ENCODE measurements at regions of chr19 and their contacts with region 1.

Region 1: GRCh38 chr19:49817964-49818648 is at the start of gene MED25:
- DNase-seq: peak; percentile 85
- ATAC-seq: peak; percentile 72
- H3K4me3 ChIP-seq: peak within 1 kb of the TSS; percentile 79
- H3K27ac ChIP-seq: peak within 1 kb of the TSS; percentile 58
- H3K4me1 ChIP-seq: peaks cover 19% of the 10 kb centered on the region
- H3K27me3 ChIP-seq: no peaks in the 10 kb centered on the region
- CTCF ChIP-seq: no peak
- total RNA-seq, gene MED25: 47.5 and 54.9 TPM in 2 replicates

Region 2: DNA sequence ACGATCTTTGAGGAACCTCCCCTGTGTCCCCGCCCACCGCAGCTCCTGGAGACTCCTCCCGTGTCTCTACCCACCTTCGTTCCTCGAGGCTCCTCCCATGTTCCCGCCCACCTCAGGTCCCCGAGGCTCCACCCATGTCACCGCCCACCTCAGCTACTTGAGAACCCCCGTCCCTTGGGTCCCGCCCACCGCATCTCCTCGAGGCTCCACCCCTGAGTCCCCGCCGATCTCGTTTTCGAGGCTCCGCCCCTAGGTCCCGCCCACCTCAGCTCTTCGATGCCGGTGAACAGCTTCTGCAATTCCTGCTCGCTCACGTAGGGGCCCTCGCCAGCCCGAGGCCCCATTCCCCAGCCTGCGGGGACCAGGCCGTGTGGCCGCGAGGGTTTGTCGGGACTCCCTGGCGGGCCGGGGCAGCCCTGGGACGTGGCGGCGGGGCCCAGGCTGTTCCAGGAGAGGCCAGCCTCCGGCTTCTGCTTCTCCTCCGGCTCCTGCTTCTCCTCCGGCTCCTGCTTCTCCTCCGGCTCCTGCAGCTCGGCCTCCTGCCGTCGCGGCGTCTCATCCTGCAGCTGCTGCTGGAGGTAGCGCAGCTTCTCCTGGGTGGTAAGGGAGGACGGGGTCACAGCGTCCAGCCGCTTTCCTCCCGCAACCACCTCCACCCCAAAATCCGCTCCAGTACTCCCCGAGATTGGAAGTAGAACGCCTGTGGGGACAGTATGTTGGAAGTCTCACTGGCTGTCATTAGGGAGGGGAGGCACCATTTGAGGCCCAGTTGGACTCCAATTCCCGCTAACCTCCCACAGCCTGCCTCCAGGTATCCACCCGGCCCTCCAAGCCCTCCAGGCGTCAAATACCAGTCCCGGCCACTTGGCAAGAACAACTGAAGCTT is 71.7 kb before region 1 on chr19:
- CTCF ChIA-PET with region 1: no interaction called
- POLR2A ChIA-PET with region 1: no interaction called
- intact Hi-C with region 1: loop called (anchors 5 kb)
- DNase-seq: peak; percentile 46
- ATAC-seq: peak; percentile 50
- H3K4me3 ChIP-seq: no peak overlapping the region
- H3K27ac ChIP-seq: no peak overlapping the region
- H3K4me1 ChIP-seq: no peaks in the 10 kb centered on the region
- H3K27me3 ChIP-seq: no peaks in the 10 kb centered on the region
- CTCF ChIP-seq: 0 out of 2 replicates have a peak, but pooled peaks have one; percentile 20

Region 3: GRCh38 chr19:49766007-49766937 is 51.8 kb before region 1 on chr19:
- CTCF ChIA-PET with region 1: no interaction called
- POLR2A ChIA-PET with region 1: interaction called, 4 read pairs
- intact Hi-C with region 1: loop called (anchors 1 kb)
- DNase-seq: peak; percentile 100
- ATAC-seq: peak; percentile 91
- H3K4me3 ChIP-seq: peak overlapping the region; percentile 62
- H3K27ac ChIP-seq: peak overlapping the region; percentile 90
- H3K4me1 ChIP-seq: peaks cover 23% of the 10 kb centered on the region
- H3K27me3 ChIP-seq: no peaks in the 10 kb centered on the region
- CTCF ChIP-seq: no peak

Region 4: DNA sequence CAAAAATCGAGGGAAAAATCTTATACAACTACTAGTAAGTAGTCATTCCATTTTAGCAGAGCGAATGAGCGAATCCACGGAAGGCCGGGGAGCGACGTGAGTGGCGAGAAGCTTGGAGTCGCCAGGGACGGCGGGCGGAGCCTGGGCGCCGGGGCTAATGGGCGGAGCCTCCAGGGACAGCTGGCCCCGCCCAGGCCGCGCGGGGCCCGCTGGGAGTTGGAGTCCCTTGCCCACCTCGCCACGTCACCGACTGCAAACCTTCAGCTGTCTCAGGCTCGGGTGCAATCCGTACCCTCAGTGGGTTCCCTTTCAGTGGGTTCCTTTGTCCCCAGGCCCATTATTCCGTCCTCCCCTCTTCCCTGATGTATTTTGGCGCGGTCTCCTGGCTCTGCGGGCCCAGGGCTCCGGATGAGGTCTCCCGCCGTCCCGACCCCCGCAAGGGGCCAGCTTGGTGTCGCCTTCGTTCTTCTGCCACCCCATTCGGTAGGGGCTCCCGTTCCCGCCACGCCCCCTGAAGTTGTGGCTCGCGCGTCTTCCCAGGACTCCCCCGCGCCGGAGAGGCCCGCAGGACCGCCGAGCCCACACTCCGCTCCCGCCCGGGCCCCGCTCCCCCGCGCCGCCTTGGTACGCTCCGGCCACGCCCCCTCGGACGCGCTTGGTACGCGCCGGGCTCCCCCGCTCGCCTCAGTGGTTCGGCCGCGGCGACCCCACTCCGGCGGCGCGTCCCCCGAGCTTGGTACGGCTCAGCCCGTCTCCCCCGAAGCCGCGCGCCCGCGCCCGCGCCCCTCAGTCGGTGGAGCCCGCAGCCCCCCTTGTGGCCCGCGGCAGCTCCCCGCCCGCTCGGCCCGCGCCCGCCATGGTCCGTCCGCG is 32.6 kb after region 1 on chr19 and contains the start of gene PTOV1:
- CTCF ChIA-PET with region 1: no interaction called
- POLR2A ChIA-PET with region 1: interaction called, 23 read pairs
- intact Hi-C with region 1: loop called (anchors 1 kb)
- DNase-seq: peak; percentile 97
- ATAC-seq: peak; percentile 75
- H3K4me3 ChIP-seq: peak within 1 kb of the TSS; percentile 86
- H3K27ac ChIP-seq: peak within 1 kb of the TSS; percentile 91
- H3K4me1 ChIP-seq: peaks cover 37% of the 10 kb centered on the region
- H3K27me3 ChIP-seq: no peaks in the 10 kb centered on the region
- CTCF ChIP-seq: no peak
- total RNA-seq, gene PTOV1: 138 and 148 TPM in 2 replicates

Region 5: DNA sequence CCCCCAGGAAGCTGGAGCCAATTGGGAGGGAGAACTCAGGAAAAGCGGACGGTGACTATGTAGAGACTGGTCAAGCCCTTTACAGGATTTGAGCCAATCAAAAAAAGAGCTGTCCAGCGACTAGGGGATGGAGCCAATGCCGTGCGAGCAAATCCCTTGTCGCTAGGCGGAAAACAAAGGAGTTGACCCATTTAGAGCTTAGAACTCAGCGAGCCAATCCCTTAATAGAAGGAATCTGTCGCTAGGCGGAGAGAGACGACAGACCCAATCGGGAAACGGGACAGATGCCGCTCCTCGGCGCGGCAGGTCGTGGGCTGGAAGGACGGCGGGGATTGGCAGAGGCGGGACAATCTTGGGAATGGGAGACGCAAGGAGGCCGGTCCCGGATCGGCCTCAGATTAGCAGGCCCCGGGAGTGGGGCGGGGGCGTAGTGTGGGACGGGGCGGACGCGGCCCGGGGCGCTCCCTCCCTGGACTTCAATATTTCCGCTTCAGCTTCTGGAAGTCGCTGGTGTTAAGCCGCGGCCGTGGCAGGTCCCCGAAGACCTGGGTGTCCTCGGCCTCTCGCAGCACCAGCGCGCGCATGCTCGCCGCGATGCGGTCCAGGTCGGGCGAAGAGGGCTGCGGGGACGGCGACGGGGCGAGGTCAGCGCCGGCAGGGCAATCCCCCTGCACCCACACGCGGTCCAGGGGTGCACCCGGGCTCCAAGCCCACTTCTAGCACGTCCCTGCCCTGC is 51.5 kb after region 1 on chr19:
- CTCF ChIA-PET with region 1: no interaction called
- POLR2A ChIA-PET with region 1: no interaction called
- intact Hi-C with region 1: loop called (anchors 5 kb)
- DNase-seq: peak; percentile 100
- ATAC-seq: peak; percentile 72
- H3K4me3 ChIP-seq: peak overlapping the region; percentile 68
- H3K27ac ChIP-seq: peak overlapping the region; percentile 23
- H3K4me1 ChIP-seq: peaks cover 29% of the 10 kb centered on the region
- H3K27me3 ChIP-seq: no peaks in the 10 kb centered on the region
- CTCF ChIP-seq: no peak

Region 6: GRCh38 chr19:49877020-49877878 is 59.1 kb after region 1 on chr19 and contains the starts of genes AKT1S1 and TBC1D17:
- CTCF ChIA-PET with region 1: no interaction called
- POLR2A ChIA-PET with region 1: no interaction called
- intact Hi-C with region 1: loop called (anchors 1 kb)
- DNase-seq: peak; percentile 100
- ATAC-seq: peak; percentile 65
- H3K4me3 ChIP-seq: peak within 1 kb of the TSS; percentile 93
- H3K27ac ChIP-seq: peak within 1 kb of the TSS; percentile 91
- H3K4me1 ChIP-seq: peaks cover 26% of the 10 kb centered on the region
- H3K27me3 ChIP-seq: no peaks in the 10 kb centered on the region
- CTCF ChIP-seq: no peak
- total RNA-seq, gene AKT1S1: 42.3 and 61.0 TPM in 2 replicates
- total RNA-seq, gene TBC1D17: 17.8 and 18.8 TPM in 2 replicates

Measured in PC-3 (cell line).